Cardiac septum (tissue), 1 donor: ENCODE measurements at regions of chr11 and their contacts with region 1.

Region 1: GRCh38 chr11:130213143-130213978 is 53.8 kb downstream of the ST14 start:
- DNase-seq: peak; percentile 89

Region 2: GRCh38 chr11:130241713-130242112 is 28.4 kb after region 1 on chr11:
- intact Hi-C with region 1: no loop called
- DNase-seq: no peak

Region 3: DNA sequence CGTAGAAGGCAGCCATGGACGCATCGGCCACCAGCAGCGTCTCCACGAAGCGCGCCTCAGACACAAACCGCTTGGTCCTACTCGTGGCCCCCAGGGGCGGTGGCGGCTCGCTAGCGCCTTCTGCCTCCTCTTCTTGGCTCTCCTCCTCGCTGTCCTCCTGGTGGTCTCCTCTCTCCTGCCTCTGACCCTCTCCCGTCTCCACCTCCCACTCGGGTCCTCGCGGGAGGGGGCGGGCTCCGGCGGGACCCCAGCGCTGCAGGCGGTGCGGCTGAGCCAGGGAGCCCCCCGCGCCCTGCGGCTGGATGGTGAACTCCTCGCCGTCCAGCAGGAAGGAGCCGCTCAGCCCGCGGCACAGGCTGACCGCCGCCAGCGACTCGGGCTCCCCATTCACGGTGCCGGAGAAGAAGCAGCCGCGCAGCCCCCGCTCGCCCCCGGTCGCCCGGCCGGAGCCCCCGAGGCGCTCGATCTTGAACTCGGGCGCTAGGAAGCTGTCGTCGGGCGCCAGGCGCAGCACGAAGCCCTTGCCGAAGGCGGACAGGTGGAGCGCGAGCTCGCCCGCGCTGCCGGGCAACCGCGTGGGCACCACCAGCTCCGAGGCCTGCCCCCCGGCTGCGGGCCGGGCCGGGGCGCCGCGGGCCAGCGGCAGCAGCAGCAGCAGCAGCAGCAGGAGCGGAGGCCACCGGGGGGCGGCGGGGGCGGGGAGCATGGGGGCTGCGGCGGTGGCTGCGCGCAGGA is 214.4 kb after region 1 on chr11:
- intact Hi-C with region 1: loop called (anchors 5 kb)
- DNase-seq: no peak